PC-3 (cell line): ENCODE measurements at regions of chr14 and their contacts with region 1.

Region 1: DNA sequence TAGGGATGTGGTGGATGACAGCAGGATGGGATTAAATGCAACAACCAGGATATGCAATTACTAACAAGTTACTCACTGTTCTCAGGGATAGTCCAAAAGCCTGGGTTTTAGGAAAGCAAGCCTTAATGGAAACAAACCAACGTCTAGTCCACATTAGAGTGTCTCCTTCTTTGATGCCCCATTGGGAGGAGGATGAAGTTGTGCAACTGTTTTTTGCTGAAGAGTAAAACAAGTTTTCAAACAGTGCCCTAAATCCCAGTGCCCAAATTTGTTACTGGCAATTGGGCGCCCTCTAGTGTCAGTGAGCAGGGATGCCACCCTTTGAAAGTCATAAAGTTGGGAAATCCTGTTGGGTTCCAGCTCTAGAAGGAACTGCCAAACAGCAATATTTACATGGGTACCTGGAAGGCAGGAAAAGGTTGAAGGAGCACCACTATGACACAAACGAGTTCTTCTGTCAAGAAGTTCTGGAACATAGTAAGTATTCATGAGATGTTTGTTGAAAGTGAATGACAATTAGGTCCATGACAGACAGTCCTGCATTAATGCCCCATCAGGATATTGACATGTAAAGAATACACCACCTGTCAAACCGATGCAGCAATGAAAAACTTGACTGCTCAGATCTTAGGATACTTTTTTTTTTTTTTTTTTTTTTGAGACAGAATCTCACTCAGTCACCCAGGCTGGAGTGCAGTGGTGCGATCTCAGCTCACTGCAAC is 11.1 kb upstream of the DPF3 start:
- DNase-seq: peak; percentile 90
- ATAC-seq: peak; percentile 76
- H3K4me3 ChIP-seq: no peak overlapping the region
- H3K27ac ChIP-seq: no peak overlapping the region
- H3K4me1 ChIP-seq: peaks cover 31% of the 10 kb centered on the region
- H3K27me3 ChIP-seq: no peaks in the 10 kb centered on the region
- CTCF ChIP-seq: peak; percentile 100

Region 2: DNA sequence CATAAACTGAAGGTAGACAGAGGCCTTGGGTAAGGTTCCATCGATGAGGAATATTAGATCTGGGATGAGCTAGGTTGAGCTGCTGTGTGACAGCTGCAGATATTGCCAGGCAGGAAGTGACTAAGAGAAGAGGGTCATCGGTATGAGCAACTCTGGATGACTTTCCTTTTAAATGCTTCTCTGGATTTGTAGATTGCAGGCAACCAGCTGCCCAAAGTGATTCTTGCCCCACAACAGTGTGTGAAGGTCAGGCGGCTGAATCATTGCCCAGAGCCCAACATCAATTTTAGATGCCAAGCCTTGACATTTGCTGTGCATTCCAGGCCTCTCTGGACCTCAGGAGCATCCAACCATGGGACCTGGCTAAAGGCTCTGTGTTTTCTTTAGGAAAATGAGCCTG is 267.0 kb before region 1 on chr14:
- CTCF ChIA-PET with region 1: no interaction called
- POLR2A ChIA-PET with region 1: no interaction called
- intact Hi-C with region 1: loop called (anchors 5 kb)
- DNase-seq: peak; percentile 91
- ATAC-seq: peak; percentile 50
- H3K4me3 ChIP-seq: no peak overlapping the region
- H3K27ac ChIP-seq: peak overlapping the region; percentile 90
- H3K4me1 ChIP-seq: peaks cover 51% of the 10 kb centered on the region
- H3K27me3 ChIP-seq: no peaks in the 10 kb centered on the region
- CTCF ChIP-seq: no peak

Region 3: GRCh38 chr14:72745991-72746980 is 158.7 kb before region 1 on chr14:
- CTCF ChIA-PET with region 1: interaction called, 6 read pairs
- POLR2A ChIA-PET with region 1: no interaction called
- intact Hi-C with region 1: loop called (anchors 2 kb)
- DNase-seq: peak; percentile 48
- ATAC-seq: peak; percentile 41
- H3K4me3 ChIP-seq: no peak overlapping the region
- H3K27ac ChIP-seq: peak overlapping the region; percentile 67
- H3K4me1 ChIP-seq: peaks cover 27% of the 10 kb centered on the region
- H3K27me3 ChIP-seq: no peaks in the 10 kb centered on the region
- CTCF ChIP-seq: peak; percentile 36

Region 4: DNA sequence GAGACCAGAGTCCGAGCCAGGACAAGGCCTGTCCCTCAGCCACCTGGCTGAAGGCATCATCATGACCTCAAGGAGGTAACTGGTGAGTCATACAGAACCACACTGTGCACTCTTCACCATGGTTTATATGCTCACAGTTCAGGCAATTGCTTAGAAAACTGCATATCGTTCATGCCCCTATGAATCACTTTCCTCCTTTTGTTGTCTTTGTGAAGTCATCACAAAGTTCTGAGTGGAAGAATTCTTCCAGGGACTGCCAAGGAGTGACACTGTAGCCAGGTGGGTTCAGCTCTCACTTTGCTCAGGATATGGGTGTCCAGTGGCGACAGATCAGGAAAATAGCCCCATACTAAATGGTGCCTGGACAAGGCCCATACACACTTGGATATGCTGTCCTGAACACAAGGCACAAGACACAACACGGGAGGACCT is 103.6 kb before region 1 on chr14:
- CTCF ChIA-PET with region 1: no interaction called
- POLR2A ChIA-PET with region 1: no interaction called
- intact Hi-C with region 1: loop called (anchors 1 kb)
- DNase-seq: peak; percentile 99
- ATAC-seq: peak; percentile 98
- H3K4me3 ChIP-seq: peak overlapping the region; percentile 9; the same call in 1 of the 2 replicates
- H3K27ac ChIP-seq: peak overlapping the region; percentile 94
- H3K4me1 ChIP-seq: peaks cover 27% of the 10 kb centered on the region
- H3K27me3 ChIP-seq: no peaks in the 10 kb centered on the region
- CTCF ChIP-seq: no peak

Region 5: GRCh38 chr14:72852194-72852593 is 52.8 kb before region 1 on chr14:
- CTCF ChIA-PET with region 1: no interaction called
- POLR2A ChIA-PET with region 1: no interaction called
- intact Hi-C with region 1: no loop called
- DNase-seq: no peak
- ATAC-seq: no peak
- H3K4me3 ChIP-seq: no peak overlapping the region
- H3K27ac ChIP-seq: no peak overlapping the region
- H3K4me1 ChIP-seq: peaks cover 16% of the 10 kb centered on the region
- H3K27me3 ChIP-seq: no peaks in the 10 kb centered on the region
- CTCF ChIP-seq: no peak

Region 6: DNA sequence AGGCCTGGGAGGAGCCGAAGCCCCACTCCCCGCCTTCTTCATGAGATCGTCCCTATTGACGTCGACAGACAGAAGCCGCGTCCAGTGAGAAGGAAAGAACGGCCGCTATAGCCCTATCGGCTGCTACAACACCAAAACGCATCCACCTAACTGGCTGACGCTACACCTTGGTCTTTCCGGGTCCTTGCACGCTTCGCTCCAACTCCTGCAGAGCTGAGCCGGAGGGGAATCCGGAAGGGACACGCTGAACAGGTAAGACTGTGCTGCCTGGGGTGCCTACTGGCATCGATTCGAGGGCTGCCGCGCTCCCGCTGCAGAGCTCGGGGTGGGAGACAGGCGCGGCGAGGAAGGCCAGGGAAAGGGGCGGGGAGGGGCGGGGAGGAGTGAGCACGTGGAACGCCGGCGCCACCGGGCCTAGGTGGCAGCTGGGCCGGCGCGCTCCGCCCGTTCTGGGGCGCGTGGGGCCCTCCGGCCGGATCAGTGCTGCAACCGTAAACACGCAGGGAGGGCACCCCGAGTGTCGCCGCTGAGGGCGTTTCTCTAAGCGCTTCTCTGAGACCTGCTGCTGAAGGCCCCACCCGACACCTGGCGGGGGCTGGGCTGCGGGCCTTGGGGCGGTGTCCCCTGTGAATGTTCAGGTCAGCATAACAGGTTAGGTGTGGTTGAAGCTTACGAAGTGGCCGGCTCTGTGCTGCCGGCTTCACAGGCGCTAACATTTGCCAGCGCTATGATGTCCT is 21.5 kb after region 1 on chr14 and contains the start of gene DCAF4:
- CTCF ChIA-PET with region 1: no interaction called
- POLR2A ChIA-PET with region 1: no interaction called
- intact Hi-C with region 1: no loop called
- DNase-seq: peak; percentile 99
- ATAC-seq: peak; percentile 96
- H3K4me3 ChIP-seq: peak within 1 kb of the TSS; percentile 77
- H3K27ac ChIP-seq: peak within 1 kb of the TSS; percentile 63
- H3K4me1 ChIP-seq: peaks cover 12% of the 10 kb centered on the region
- H3K27me3 ChIP-seq: no peaks in the 10 kb centered on the region
- CTCF ChIP-seq: no peak
- total RNA-seq, gene DCAF4: 55.8 and 56.8 TPM in 2 replicates

Region 7: GRCh38 chr14:72948481-72949138 is 43.6 kb after region 1 on chr14:
- CTCF ChIA-PET with region 1: interaction called, 12 read pairs
- POLR2A ChIA-PET with region 1: no interaction called
- intact Hi-C with region 1: loop called (anchors 1 kb)
- DNase-seq: peak; percentile 86
- ATAC-seq: peak; percentile 38
- H3K4me3 ChIP-seq: no peak overlapping the region
- H3K27ac ChIP-seq: no peak overlapping the region
- H3K4me1 ChIP-seq: peaks cover 17% of the 10 kb centered on the region
- H3K27me3 ChIP-seq: no peaks in the 10 kb centered on the region
- CTCF ChIP-seq: peak; percentile 99